ENCODE measurements at regions of chr1 and their contacts with region 1.

Region 1: GRCh38 chr1:10510520-10511493 is 36.1 kb downstream of the PEX14 start:
- DNase-seq: no peak
- ATAC-seq: peak; percentile 28

Region 2: DNA sequence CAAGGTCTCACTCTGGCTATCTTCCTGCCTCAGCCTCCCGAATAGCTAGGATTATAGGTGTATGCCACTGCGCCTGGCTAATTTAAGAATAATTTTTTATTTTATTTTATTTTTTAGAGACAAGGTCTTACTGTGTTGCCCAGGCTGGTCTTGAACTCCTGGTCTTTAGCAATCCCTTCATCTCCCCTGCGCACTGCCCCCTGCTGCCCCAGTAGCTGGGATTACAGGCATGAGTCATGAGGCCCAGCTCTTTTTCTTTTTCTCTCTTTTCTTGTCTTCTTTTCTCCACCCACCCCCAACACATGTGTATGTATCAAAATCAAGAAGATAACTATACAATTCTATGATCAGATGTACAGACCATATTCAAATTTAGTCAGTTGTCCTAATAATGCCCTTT is 51.1 kb after region 1 on chr1:
- intact Hi-C with region 1: no loop called
- DNase-seq: no peak
- ATAC-seq: no peak

Region 3: DNA sequence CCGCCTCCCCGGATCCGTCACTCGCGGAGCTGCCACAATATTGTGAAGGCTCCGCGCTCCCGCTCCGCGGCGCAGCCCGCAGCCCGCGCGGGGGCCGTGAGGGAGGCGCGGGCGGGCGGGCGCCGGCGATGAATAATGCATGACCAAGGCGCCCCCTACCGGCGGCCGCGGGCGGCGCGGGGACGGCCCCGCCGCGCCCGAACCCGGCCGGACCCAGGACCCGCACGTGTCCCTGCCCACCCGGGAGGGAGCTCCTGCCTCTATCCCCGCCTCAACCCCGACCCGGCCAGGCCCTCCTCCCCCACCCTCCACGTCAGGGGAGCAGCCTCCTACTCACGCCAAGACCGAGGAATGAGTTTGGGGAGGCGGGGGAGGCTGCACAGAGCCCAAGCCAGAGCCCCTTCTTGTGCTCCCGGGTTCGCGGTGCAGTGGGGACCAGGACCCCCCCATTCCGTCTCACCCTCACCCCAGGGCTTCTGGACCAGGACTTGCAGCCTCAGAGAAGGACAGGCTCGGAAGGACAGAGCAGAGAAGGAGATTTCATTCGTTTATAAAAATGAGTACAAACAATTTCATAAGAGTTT is 356.4 kb after region 1 on chr1:
- intact Hi-C with region 1: loop called (anchors 10 kb)
- DNase-seq: peak; percentile 85
- ATAC-seq: peak; percentile 80

Measured in left ventricle myocardium superior (tissue), 1 donor.